Dendritic cell treated with granulocyte-macrophage colony-stimulating factor and Interleukin-4, amounts not matched to agents 40 ng/mL and 50 ng/mL, for 4 days (primary cell): ENCODE measurements at regions of chr11 and their contacts with region 1.

Region 1: DNA sequence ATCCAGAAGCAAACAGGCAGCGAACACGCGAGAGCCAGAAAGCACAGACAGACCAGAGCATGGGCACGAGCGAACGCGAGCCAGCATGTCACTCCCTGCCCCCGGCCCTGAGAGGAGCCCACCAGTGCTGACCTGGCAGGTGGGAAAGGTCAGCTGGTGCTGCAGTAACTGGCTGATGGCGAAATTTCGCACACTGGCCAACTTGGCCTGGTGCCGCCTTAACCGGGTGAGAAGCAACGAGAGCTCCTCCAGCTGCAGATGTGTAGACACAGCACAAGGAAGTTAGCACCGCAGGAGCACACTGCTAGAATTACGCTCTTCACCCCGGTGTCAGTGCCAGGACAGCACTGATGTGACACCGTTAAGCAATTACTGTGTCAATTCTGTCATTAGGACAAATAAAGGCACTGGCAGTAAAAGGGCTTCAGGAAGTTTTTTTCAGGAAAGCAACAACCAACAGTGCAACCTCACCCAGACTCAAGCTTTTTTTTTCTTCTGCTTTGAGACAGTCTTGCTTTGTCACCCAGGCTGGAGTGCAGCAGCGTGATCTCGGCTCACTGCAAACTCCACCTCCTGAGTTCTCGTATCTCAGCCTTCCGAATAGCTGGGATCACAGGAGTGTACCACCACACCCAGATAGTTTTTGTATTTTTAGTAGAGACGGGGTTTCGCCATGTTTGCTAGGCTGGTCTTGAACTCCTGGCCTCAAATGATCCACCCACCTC is 76.8 kb downstream of the C11orf58 start:
- H3K4me3 Mint-ChIP-seq: peak overlapping the region; percentile 37
- H3K27ac Mint-ChIP-seq: peak overlapping the region; percentile 61
- H3K4me1 Mint-ChIP-seq: peaks cover 85% of the 10 kb centered on the region
- H3K27me3 Mint-ChIP-seq: no peaks in the 10 kb centered on the region

Region 2: GRCh38 chr11:16791191-16791961 is 23.8 kb before region 1 on chr11:
- intact Hi-C with region 1: loop called (anchors 2 kb)
- H3K4me3 Mint-ChIP-seq: peak overlapping the region; percentile 13
- H3K27ac Mint-ChIP-seq: peak overlapping the region; percentile 99
- H3K4me1 Mint-ChIP-seq: peaks cover 77% of the 10 kb centered on the region
- H3K27me3 Mint-ChIP-seq: no peaks in the 10 kb centered on the region

Region 3: GRCh38 chr11:16891964-16892363 is 76.8 kb after region 1 on chr11:
- intact Hi-C with region 1: no loop called
- H3K4me3 Mint-ChIP-seq: no peak overlapping the region
- H3K27ac Mint-ChIP-seq: no peak overlapping the region
- H3K4me1 Mint-ChIP-seq: no peaks in the 10 kb centered on the region
- H3K27me3 Mint-ChIP-seq: no peaks in the 10 kb centered on the region